ENCODE measurements at regions of chr17 and their contacts with region 1.

Region 1: GRCh38 chr17:75034236-75034908 is 12.4 kb downstream of the ATP5PD start:
- DNase-seq: peak; percentile 63 to 95 (median 77)
- ATAC-seq: peak; percentile 37
- H3K4me3 ChIP-seq: peak overlapping the region; percentile 72
- H3K4me3 Mint-ChIP-seq: peak overlapping the region; percentile 85 to 97 (median 94)
- H3K27ac ChIP-seq: peak overlapping the region; percentile 77
- H3K27ac Mint-ChIP-seq: peak overlapping the region; percentile 95 to 100 (median 99)
- H3K4me1 ChIP-seq: peaks cover 36 to 40% of the 10 kb centered on the region in 2 donors
- H3K4me1 Mint-ChIP-seq: peaks cover 26 to 73% (median 58%) of the 10 kb centered on the region in 7 donors
- H3K27me3 ChIP-seq: no peaks in the 10 kb centered on the region
- H3K27me3 Mint-ChIP-seq: peaks cover 0 to 10% (median 0%) of the 10 kb centered on the region in 5 donors

Region 2: GRCh38 chr17:74776044-74776977 is 258.1 kb before region 1 on chr17 and contains the start of gene NAT9:
- CTCF ChIA-PET with region 1: no interaction called
- POLR2A ChIA-PET with region 1: no interaction called
- intact Hi-C with region 1: no loop called
- DNase-seq: peak; percentile 95 to 100 (median 98)
- ATAC-seq: peak; percentile 86
- H3K4me3 ChIP-seq: peak within 1 kb of the TSS; percentile 91
- H3K4me3 Mint-ChIP-seq: peak within 1 kb of the TSS; percentile 96 to 100 (median 98)
- H3K27ac ChIP-seq: peak within 1 kb of the TSS; percentile 78
- H3K27ac Mint-ChIP-seq: peak within 1 kb of the TSS; percentile 91 to 99 (median 96)
- H3K4me1 ChIP-seq: peaks cover 49 to 51% of the 10 kb centered on the region in 2 donors
- H3K4me1 Mint-ChIP-seq: peaks cover 32 to 76% (median 66%) of the 10 kb centered on the region in 7 donors
- H3K27me3 ChIP-seq: no peaks in the 10 kb centered on the region
- H3K27me3 Mint-ChIP-seq: no peaks in the 10 kb centered on the region
- total RNA-seq, gene NAT9: 41.4 to 78.8 (median 56.9) TPM

Region 3: DNA sequence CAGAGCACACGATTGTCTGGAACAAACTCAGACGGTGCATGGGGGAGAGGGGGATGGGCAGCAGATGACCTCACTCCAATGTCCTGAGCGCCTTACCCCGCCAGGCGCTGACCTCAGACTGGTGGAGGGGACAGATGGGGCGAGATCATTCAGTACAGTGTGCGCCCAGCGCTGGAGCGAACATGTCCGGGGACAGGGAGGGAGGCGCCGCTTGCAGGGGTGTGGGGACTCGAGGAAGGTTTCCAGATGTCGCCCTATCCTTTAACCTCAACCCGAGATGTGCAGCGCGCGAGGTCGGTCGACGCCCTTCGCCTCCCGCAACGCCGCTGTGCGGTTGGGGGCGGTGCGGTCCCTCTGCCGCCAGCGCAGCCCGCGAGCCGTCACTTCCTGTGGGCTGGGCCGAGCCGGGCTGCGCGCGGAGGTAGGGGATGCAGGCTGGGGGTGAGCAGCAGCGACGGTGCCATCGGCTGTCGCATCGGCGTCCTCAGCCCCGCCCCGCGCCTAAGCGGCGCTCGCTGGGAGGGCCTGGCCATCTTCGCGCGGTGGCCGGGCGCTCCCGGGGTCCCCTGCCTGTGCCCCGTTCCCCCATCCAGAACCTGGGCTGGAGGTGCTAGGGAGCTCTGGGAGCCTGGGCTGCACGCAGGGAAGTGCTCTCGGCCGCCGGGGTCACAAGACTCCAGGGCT is 52.3 kb before region 1 on chr17:
- CTCF ChIA-PET with region 1: no interaction called
- POLR2A ChIA-PET with region 1: interaction called, 3 read pairs
- intact Hi-C with region 1: loop called in 1 of 2 experiments (anchors 1 kb)
- DNase-seq: peak; percentile 67 to 85 (median 83)
- ATAC-seq: peak; percentile 97
- H3K4me3 ChIP-seq: peak overlapping the region; percentile 77
- H3K4me3 Mint-ChIP-seq: peak overlapping the region; percentile 85 to 95 (median 92)
- H3K27ac ChIP-seq: peak overlapping the region; percentile 65
- H3K27ac Mint-ChIP-seq: peak overlapping the region; percentile 64 to 96 (median 87)
- H3K4me1 ChIP-seq: peaks cover 18 to 20% of the 10 kb centered on the region in 2 donors
- H3K4me1 Mint-ChIP-seq: peaks cover 3 to 27% (median 23%) of the 10 kb centered on the region in 7 donors
- H3K27me3 ChIP-seq: no peaks in the 10 kb centered on the region
- H3K27me3 Mint-ChIP-seq: peaks cover 0 to 57% (median 0%) of the 10 kb centered on the region in 5 donors

Region 4: DNA sequence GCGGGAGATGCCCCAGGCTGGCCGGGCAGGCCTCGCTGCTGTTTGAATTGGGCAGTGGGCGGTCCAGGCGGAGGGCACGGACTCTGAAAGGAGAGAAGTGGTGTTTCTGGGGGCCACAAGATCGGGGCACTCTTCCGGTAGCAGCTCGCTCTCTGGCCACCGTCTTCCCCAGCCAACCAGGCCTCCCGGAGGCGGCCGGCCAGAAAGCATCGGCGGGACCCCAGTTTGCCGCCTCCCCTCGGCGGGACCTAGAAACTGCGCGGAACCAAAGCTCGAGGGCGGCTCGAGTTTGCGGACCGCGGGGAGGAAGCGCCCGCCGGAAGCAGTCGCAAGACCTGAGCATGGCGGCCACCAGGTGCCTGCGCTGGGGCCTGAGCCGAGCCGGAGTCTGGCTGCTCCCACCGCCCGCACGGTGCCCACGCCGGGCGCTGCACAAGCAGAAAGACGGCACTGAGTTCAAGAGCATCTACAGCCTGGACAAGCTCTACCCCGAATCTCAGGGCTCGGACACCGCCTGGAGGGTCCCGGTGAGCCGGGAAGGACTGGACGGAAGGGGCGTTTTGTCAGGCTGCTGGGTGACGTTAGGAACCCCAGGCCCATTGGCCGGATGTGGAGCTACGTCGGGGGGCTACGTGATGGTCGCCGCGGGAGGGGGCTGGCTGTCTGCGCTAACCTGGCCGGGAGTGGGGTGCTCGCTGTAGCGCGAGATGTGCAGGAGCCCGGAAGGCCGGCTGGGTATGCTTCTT is 21.9 kb before region 1 on chr17 and contains the start of gene MRPL58:
- CTCF ChIA-PET with region 1: interaction called, 10 read pairs
- POLR2A ChIA-PET with region 1: interaction called, 50 read pairs
- intact Hi-C with region 1: loop called (anchors 1 kb)
- DNase-seq: peak; percentile 66 to 81 (median 75)
- ATAC-seq: peak; percentile 97
- H3K4me3 ChIP-seq: peak within 1 kb of the TSS; percentile 69
- H3K4me3 Mint-ChIP-seq: peak within 1 kb of the TSS; percentile 76 to 98 (median 94)
- H3K27ac ChIP-seq: peak within 1 kb of the TSS; percentile 83
- H3K27ac Mint-ChIP-seq: peak within 1 kb of the TSS; percentile 5 to 97 (median 92)
- H3K4me1 ChIP-seq: peaks cover 9 to 14% of the 10 kb centered on the region in 2 donors
- H3K4me1 Mint-ChIP-seq: peaks cover 25 to 38% (median 35%) of the 10 kb centered on the region in 7 donors
- H3K27me3 ChIP-seq: no peaks in the 10 kb centered on the region
- H3K27me3 Mint-ChIP-seq: peaks cover 0 to 4% (median 0%) of the 10 kb centered on the region in 5 donors
- total RNA-seq, gene MRPL58: 11.7 to 46.1 (median 23.0) TPM

Region 5: GRCh38 chr17:75059369-75060345 is 25.3 kb after region 1 on chr17:
- CTCF ChIA-PET with region 1: interaction called, 3 read pairs
- POLR2A ChIA-PET with region 1: interaction called, 10 read pairs
- intact Hi-C with region 1: no loop called
- DNase-seq: peak in 6 of 9 donors; percentile 32 to 56 (median 48)
- ATAC-seq: peak; percentile 79
- H3K4me3 ChIP-seq: no peak overlapping the region
- H3K4me3 Mint-ChIP-seq: no peak overlapping the region
- H3K27ac ChIP-seq: peak overlapping the region; percentile 23
- H3K27ac Mint-ChIP-seq: peak overlapping the region in 8 of 9 donors; percentile 51 to 91 (median 81)
- H3K4me1 ChIP-seq: no peaks in the 10 kb centered on the region
- H3K4me1 Mint-ChIP-seq: peaks cover 0 to 26% (median 20%) of the 10 kb centered on the region in 7 donors
- H3K27me3 ChIP-seq: no peaks in the 10 kb centered on the region
- H3K27me3 Mint-ChIP-seq: no peaks in the 10 kb centered on the region

Region 6: DNA sequence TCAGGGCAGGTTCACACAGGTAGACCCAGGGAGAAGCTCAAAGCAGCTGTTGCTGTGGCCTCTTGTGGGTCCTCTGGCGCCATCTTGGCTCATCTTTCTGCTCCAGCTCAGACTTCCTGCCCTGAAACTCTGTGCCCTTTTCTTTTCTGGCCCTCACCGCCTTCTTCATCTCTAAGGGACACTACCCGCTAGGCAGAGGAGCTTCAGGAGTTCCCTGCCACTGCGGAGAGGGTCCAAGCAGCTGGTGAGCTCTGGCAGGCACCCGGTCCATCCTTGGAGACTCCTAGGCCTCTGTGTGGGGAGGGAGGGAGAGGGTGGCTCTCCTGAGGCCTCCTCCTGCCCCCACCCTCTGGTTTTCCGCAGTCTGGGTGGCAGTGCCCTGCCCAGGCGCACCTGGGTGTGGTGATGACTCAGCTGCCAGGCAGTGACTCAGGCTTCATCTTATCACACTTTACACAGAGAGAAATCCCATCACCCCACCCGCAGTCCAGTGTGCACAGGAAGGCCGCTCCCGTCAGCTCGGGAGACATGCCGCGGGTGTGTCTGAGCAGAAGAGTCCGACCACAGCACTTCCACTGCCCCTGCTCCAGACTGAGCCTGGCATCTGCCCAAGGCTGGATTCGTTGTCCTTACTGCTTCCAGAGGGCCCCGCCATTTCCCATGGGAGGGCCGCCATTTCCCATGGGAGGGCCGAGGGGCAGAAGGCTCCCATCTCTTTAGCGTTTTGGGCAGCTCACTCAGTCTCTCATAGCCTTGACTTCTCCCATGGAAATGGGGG is 89.9 kb after region 1 on chr17:
- CTCF ChIA-PET with region 1: no interaction called
- POLR2A ChIA-PET with region 1: no interaction called
- intact Hi-C with region 1: no loop called
- DNase-seq: peak in 1 of 9 donors; percentile 48
- ATAC-seq: peak; percentile 80
- H3K4me3 ChIP-seq: no peak overlapping the region
- H3K4me3 Mint-ChIP-seq: peak overlapping the region in 3 of 10 donors; percentile 6 to 81 (median 16)
- H3K27ac ChIP-seq: no peak overlapping the region
- H3K27ac Mint-ChIP-seq: peak overlapping the region in 6 of 9 donors; percentile 31 to 91 (median 58)
- H3K4me1 ChIP-seq: peaks cover 3 to 18% of the 10 kb centered on the region in 2 donors
- H3K4me1 Mint-ChIP-seq: peaks cover 24 to 40% (median 33%) of the 10 kb centered on the region in 7 donors
- H3K27me3 ChIP-seq: no peaks in the 10 kb centered on the region
- H3K27me3 Mint-ChIP-seq: no peaks in the 10 kb centered on the region

Region 7: DNA sequence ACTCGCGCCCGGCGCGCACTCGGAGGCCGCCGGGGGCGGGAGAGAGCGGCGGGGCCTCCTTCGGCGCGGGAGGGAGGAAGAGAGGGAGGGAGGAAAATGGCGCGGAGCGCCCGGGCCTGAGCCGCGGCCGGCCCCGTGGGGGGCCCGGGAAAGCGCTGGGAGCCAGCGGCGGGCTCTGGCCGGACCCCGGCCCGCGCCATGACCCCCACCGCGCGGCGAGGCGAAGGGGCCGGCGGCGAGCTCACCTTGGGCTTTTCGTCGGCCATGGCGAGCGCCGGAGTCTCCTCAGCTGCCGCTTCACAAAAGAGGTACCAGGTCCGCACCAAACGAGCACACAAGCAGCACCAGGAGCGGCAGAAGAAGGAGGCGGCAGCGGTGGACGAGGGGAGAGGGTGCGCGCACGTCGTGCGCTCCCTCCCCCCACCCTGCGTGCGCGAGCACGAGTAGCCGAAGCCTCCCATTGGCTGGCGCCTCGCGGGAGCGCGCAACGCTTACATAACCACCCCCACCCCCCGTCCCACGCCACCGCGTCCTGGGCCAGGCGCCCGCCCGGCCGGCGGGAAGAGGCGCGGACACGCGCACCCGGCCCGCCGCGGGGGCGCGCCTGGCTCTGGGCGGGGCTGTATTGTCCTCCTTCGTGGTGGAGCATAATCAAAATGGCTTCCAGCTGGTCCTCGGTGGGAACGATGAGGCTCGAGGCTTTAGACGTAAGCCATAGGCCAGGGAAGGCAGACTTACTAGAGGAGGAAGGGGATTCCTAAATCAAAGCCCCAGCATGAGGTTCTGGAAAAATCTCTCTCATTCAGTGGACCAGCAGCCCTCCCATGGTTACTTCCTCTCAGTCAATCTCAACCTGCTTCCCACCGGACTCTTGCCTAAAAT is 148.4 kb after region 1 on chr17 and contains the start of gene SUMO2:
- CTCF ChIA-PET with region 1: no interaction called
- POLR2A ChIA-PET with region 1: interaction called, 4 read pairs
- intact Hi-C with region 1: loop called in 1 of 2 experiments (anchors 2 kb)
- DNase-seq: peak; percentile 90 to 97 (median 94)
- ATAC-seq: peak; percentile 92
- H3K4me3 ChIP-seq: peak within 1 kb of the TSS; percentile 56
- H3K4me3 Mint-ChIP-seq: peak within 1 kb of the TSS; percentile 87 to 100 (median 92)
- H3K27ac ChIP-seq: peak within 1 kb of the TSS; percentile 94
- H3K27ac Mint-ChIP-seq: peak within 1 kb of the TSS; percentile 92 to 99 (median 97)
- H3K4me1 ChIP-seq: peaks cover 22 to 26% of the 10 kb centered on the region in 2 donors
- H3K4me1 Mint-ChIP-seq: peaks cover 20 to 55% (median 38%) of the 10 kb centered on the region in 7 donors
- H3K27me3 ChIP-seq: no peaks in the 10 kb centered on the region
- H3K27me3 Mint-ChIP-seq: no peaks in the 10 kb centered on the region
- total RNA-seq, gene SUMO2: 201 to 494 (median 247) TPM

Region 8: DNA sequence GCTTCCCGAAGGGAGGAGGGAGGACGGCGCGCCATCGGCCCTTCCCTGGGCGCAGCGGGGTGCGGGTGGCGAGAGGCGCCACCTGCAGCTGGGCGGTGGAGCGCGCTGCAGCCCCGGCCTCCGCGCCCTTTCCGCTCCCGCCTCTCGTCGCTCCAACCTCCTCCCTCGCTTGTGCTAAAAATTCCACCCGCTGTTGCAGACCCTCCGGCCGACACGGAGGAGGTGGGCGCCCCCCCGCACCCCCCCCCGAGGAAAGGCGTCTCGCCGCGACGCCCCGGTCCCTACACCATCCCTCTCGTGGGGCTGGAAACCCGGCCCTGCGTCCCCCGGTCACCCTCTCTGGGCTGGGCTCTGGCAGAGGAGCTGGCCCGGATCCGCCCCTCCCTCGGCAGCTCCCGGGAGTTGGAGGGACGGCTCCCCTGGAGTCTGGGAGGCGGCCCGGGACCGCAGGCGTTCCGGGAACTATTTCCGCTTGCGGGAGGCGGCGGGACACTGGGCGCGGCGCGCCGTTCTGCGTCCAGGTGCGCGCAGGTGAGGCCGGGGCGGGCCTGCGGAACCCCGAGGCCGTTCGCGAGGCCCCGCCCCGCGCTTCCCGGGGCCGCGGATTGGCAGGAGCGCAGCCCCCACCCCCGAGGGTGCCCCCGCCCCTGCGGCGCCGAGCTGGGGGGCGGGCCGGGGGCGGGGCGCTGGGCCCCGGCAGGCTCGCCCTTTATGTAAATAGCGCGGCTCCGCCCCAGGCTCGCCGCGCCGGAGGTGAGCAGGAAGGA is 490.8 kb after region 1 on chr17 and contains the start of gene LLGL2:
- CTCF ChIA-PET with region 1: no interaction called
- POLR2A ChIA-PET with region 1: no interaction called
- intact Hi-C with region 1: loop called in 1 of 2 experiments (anchors 2 kb)
- DNase-seq: peak; percentile 82 to 91 (median 89)
- ATAC-seq: peak; percentile 98
- H3K4me3 ChIP-seq: peak within 1 kb of the TSS; percentile 75
- H3K4me3 Mint-ChIP-seq: peak within 1 kb of the TSS; percentile 76 to 86 (median 82)
- H3K27ac ChIP-seq: peak within 1 kb of the TSS; percentile 67
- H3K27ac Mint-ChIP-seq: peak within 1 kb of the TSS in 7 of 9 donors; percentile 45 to 74 (median 59)
- H3K4me1 ChIP-seq: peaks cover 6 to 7% of the 10 kb centered on the region in 2 donors
- H3K4me1 Mint-ChIP-seq: peaks cover 0 to 20% (median 16%) of the 10 kb centered on the region in 7 donors
- H3K27me3 ChIP-seq: no peaks in the 10 kb centered on the region
- H3K27me3 Mint-ChIP-seq: peaks cover 0 to 11% (median 0%) of the 10 kb centered on the region in 5 donors
- total RNA-seq, gene LLGL2: 22.4 to 55.7 (median 33.7) TPM